ENCODE measurements at regions of chr19 and their contacts with region 1.

Region 1: DNA sequence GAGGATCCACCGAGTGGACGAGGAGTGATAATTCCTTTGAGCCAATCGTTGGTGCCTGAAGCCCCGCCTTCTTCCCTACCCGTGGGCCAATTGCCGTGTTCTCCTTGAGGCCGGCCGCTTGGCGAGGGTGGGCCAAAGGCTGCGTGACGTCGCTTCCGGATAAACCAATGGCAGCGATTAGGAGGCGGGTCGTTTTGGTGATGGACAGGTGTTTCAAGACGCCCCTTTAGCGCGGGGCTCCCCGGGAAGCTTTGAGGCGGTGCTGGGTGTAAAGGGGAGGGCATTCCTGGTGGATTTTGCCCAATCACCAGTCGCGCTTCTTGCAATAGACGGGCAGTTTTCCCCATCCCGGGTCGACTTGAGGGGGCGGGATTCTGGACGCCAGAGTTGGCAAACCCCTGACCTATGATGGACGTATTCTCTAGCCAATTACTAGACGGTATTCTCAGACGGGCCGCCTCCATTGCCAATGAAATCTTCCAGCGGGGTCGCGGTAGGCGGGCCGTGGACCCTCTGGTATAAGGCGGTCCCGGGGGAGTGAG is 310 bp upstream of the PRMT1 start:
- DNase-seq: peak; percentile 100
- H3K4me3 ChIP-seq: peak overlapping the region; percentile 98
- H3K27ac ChIP-seq: peak overlapping the region; percentile 94
- H3K27me3 ChIP-seq: no peaks in the 10 kb centered on the region
- CTCF ChIP-seq: no peak

Region 2: DNA sequence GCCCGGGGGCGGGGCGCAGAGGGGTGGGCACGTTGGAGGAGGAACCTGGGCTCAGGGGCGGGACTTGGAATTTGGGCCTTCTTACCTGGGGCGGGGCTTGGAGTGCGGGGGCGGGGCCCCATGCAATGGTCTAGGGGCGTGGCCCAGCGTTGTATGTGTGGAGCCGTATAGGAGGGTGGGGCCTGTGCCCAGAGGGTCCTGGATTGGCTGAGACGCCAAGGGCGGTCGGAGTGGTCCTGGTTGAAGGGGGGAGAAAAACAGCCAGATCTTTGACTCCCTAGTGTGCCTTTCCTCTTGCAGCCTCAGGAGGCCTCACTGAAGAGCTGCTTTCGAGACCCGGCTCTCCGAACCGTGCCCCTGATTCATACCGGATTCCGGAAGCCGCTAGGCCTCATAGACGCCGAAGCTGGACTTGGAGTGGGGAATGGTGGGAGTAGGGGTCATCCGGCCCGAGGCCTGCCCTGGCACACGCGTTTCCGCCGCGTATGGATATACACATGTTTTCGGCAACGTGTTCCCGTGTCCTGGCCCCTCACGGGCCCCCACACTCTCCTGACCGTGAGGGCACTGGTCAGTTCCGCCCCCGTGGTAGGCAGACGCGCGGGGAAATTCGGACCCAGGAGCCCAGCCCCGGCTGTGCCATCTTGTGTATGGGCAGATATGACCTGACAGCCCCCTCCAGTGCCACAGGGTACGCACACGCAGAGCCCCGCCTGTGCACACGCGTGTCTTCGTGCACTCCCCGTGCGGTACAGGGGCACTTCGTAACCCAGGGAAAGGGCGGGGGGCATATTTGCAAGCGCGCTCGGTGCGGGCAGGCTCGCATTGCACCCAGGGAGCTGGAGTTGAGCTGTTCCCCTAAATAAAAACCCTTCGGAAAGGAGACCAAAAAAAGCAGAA is 86.4 kb before region 1 on chr19:
- CTCF ChIA-PET with region 1: interaction called, 11 read pairs
- POLR2A ChIA-PET with region 1: interaction called, 6 read pairs
- DNase-seq: peak; percentile 88
- H3K4me3 ChIP-seq: peak overlapping the region; percentile 78
- H3K27ac ChIP-seq: peak overlapping the region; percentile 68
- H3K27me3 ChIP-seq: no peaks in the 10 kb centered on the region
- CTCF ChIP-seq: 0 out of 2 replicates have a peak, but pooled peaks have one; percentile 3

Region 3: DNA sequence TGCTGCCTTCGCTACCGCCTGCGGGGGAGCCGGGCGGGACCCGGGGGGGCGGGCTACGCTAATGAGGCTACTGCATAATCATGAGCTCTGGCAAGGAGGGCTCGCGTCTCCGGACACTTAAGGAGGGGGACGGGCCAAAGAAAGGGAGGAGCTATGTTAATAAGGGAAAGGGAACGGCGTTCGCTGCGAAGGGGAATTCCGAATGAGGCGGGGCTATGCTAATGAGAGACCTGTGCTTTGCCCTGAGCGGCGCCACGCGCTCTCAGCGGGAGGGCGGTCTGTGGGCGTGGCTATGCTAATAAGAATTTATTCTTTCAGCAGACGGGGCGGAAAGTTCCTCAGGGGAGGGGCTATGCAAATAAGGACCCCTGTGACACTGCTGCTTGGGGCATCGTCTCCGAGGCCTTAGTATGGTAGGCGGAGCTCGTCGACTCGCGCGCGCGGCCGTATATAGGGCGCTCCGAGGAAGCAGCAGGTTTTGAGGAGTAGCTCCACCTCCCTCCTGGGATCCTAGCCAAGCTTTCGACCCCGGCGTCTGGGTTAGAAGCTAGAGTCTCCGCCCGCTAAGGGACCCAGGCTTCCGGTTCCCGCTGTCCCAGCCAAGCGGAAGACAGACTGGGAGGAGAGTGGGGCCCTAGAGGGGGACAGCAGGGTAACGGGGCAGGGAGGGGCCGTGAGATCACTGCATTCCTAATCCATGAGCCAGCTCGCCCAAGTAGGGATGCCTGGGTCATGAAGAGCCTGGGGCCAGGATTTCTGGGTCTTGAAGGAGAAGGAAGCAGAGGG is 36.5 kb before region 1 on chr19 and contains the start of gene RRAS:
- CTCF ChIA-PET with region 1: interaction called, 5 read pairs
- POLR2A ChIA-PET with region 1: interaction called, 18 read pairs
- DNase-seq: peak; percentile 100
- H3K4me3 ChIP-seq: peak within 1 kb of the TSS; percentile 73
- H3K27ac ChIP-seq: peak within 1 kb of the TSS; percentile 100
- H3K27me3 ChIP-seq: no peaks in the 10 kb centered on the region
- CTCF ChIP-seq: no peak
- polyA plus RNA-seq, gene RRAS: 64.2 and 93.3 TPM in 2 replicates

Region 4: DNA sequence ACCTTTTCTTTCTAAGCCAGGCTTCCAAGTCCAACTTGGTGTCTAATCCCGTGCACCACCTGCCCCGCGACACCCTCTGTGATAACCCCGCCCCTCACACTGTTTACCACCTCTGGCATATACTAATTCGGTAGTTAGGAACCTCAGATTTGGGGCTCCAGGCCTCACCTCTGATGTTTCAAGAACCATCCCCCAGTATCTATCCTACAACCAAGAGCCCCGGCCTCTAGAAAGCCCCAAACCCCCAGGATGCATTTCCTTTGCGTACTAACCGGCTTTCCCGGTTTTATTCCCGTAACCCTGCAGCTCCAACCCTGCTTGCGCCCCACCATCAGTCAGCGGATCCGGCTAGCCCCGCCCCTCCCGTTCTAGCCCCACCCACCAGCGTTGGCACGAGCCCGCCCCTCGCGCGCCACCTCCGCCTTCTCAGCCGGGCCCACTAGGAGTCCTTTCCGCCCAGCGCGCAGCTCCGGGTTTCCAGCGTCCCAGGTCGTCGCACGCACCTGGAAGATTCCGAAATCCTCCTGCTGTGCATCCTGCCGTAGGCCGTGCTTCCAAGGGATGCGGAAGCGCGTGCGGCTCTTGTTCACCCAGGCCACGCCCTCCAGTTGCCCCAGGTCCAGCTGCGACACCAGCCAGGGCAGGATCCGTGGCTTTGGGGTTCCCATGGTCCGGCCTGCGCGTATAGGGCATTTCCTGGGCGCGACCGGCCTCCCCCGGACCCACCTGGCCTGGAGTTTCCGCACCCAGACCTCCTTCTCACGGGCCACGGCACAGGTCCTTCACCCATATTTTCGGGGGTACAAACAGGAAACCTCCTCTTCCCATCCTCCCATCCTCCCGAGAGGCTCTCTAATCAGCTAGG is 12.4 kb before region 1 on chr19:
- CTCF ChIA-PET with region 1: interaction called, 8 read pairs
- POLR2A ChIA-PET with region 1: interaction called, 14 read pairs
- DNase-seq: no peak
- H3K4me3 ChIP-seq: peak overlapping the region; percentile 93
- H3K27ac ChIP-seq: peak overlapping the region; percentile 75
- H3K27me3 ChIP-seq: no peaks in the 10 kb centered on the region
- CTCF ChIP-seq: no peak; the same call in 1 of the 2 replicates

Region 5: DNA sequence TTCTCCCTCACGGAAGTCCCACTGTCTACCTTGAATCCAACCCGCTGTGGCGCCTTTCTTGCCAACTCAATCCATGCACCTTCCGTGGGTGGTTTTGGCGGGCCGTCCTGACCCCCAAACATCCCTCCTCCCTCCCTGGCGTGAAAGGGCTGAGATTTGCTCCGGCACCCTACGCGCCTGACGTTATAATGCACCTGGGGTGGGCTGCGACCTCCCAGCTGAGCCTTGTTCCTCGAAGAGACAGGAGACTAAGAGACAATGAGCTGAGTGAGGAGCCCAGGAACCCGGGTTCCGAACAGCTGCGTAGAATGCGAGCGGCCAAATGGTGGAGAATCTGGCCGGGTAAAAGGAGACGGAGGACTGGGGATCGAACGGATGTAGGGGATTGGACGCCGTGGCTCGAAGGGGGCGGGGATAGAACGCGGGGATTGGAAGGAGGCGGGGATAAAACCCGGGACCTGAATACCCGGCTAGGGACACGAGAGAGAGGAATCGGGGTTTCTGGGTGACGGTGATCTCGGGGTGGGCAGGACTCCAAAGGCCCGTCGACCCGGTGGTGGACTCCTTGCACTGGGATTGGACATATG is 14.0 kb after region 1 on chr19 and contains the start of gene CPT1C:
- CTCF ChIA-PET with region 1: interaction called, 14 read pairs
- POLR2A ChIA-PET with region 1: interaction called, 9 read pairs
- DNase-seq: peak; percentile 61
- H3K4me3 ChIP-seq: peak within 1 kb of the TSS; percentile 73
- H3K27ac ChIP-seq: peak within 1 kb of the TSS; percentile 70
- H3K27me3 ChIP-seq: no peaks in the 10 kb centered on the region
- CTCF ChIP-seq: no peak
- polyA plus RNA-seq, gene CPT1C: 20.3 and 24.2 TPM in 2 replicates

Region 6: DNA sequence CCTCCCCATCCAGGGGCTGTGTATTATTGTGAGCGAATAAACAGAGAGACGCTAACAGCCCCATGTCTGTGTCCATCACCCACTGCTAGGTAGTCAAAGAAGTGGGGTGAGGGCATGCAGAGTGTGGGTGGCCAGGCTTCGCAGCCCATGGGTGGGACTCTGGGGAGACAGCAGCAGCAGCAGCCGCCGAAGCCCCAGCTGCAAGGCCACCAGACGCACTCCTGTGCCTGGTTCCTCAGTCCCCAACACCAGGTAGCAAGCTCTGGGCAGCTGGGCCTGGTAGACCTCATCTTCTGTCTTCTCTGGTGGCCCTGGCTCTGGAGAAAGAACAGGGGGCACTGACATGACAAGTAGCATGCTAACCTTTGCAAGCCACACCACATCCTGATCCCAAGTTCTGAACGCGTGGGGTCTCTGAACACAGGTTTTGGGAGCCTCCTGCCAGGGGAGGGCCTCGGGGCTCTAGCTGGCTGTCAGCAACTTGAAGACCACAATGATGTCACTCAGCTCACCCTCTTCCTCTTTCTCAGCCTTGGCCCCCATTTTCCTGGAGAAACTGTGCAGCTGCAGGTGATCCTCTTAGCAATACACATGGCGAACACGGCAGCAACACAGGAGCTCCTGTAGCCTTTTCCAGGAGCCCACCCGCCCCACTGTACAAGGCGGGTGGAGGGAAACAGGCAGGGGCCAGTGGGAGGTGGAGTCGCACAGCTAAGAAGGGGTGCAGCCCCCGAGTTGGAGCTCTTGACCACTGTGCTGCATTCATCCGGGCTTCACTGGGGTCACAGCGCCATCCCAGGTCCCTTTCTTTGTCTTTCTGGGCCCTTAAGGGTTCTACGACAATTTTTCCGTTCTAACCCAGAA is 130.5 kb after region 1 on chr19:
- CTCF ChIA-PET with region 1: no interaction called
- POLR2A ChIA-PET with region 1: no interaction called
- DNase-seq: no peak
- H3K4me3 ChIP-seq: no peak overlapping the region
- H3K27ac ChIP-seq: no peak overlapping the region
- H3K27me3 ChIP-seq: no peaks in the 10 kb centered on the region
- CTCF ChIP-seq: no peak

Region 7: DNA sequence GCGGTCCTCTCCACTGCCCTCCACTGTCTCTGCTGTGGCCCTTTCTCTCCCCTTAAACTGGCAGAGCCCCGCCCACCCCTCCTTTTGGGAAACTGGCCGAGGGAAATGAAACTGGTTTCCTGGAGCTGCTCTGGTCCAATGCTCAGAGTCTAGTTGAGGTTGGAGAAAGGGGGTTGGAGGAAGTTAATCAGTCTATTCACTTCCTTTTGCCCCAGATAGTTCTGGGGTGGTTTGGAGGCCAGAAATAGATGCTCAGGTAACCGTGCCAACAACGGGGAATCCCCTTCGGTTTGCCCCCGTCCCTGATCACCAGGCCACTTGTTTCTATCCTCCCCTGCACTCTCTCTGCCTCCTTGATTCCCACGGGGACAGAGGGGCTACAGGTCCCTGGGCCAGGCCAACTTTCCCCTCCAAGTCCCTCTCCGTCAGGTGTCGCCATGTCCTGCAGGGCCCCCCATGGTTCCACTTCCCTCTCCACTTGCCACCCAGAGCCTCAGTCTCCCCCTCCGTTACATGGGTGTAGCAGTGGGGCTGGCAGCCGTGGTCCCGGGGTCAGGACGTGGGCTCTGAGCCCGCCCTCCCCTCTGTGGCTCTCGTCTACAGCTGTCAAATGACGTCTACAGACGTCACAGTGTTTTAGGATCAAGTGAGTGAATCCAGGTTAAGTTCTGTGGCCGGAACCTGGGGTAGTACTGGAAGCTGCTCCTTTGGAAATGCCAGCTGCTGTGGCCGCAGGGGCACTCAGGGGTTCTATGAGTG is 220.3 kb after region 1 on chr19 and contains the start of gene IL4I1:
- CTCF ChIA-PET with region 1: no interaction called
- POLR2A ChIA-PET with region 1: no interaction called
- DNase-seq: no peak
- H3K4me3 ChIP-seq: no peak within 1 kb of the TSS
- H3K27ac ChIP-seq: peak within 1 kb of the TSS; percentile 61
- H3K27me3 ChIP-seq: no peaks in the 10 kb centered on the region
- CTCF ChIP-seq: no peak
- polyA plus RNA-seq, gene IL4I1: 0.30 and 0.92 TPM in 2 replicates

Measured in AG04450 (cell line).